A673 (cell line): ENCODE measurements at regions of chr15 and their contacts with region 1.

Region 1: DNA sequence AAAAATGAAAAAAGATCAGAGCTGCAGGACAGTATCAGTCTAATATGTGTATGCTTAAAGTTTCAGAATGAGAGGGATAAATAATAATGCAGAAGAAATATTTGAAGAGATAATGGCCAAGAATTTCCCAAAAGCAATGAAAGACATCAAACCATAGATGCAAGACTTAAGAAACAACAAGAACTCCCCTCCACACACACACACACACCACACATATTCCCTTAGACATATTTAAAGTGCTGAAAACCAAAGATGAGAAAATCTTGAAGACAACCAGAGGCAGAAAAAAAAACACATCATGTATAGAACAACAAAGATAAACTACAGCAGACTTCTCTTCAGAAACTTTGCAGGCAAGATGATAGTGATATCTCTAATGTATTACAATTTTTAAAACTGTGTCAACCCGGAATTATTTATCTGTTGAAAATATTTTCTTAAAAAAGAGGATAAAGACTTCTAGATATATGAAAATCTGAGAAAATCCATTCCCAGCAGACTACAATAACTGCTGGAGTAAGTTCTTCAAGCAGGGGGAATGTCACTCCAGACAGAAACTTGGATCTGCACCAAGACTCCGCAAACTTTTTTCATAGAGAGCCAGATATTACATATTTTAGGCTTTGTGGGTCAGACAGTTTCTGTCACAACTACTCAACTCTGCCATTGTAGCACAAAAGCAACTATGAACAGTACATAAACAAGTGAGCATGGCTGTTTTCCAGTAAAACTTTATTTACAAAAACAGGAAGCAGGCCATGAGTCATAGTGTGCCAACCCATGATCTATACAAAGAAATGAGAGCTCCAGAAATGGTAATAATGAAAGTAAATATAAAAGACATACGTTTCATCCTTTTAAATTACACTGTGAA is 223.4 kb upstream of the CGNL1 start:
- DNase-seq: peak; percentile 77
- H3K4me3 ChIP-seq: no peak overlapping the region
- H3K27ac ChIP-seq: peak overlapping the region; percentile 93
- H3K4me1 ChIP-seq: peaks cover 69% of the 10 kb centered on the region
- H3K27me3 ChIP-seq: no peaks in the 10 kb centered on the region
- CTCF ChIP-seq: no peak

Region 2: DNA sequence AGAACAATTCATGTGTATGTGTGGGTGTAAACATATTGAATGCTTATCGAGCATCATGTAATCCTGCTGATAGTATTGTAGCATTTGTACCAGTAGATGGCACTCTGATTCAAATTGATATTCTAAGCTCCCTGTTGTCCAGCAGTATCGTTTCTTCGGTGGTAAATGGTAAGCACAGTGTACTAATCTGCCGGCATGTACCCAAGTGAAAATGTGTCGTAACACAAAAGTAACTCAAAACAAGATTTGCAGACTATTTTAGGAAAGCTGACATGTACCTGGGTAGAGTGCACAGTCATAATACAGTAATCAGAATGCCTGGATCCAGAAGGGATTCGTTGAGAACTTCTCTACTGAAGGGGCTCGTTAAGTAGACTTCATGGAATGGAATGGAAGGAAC is 656.3 kb before region 1 on chr15:
- CTCF ChIA-PET with region 1: no interaction called
- POLR2A ChIA-PET with region 1: no interaction called
- intact Hi-C with region 1: loop called (anchors 5 kb)
- DNase-seq: peak; percentile 89
- H3K4me3 ChIP-seq: no peak overlapping the region
- H3K27ac ChIP-seq: no peak overlapping the region
- H3K4me1 ChIP-seq: peaks cover 14% of the 10 kb centered on the region
- H3K27me3 ChIP-seq: no peaks in the 10 kb centered on the region
- CTCF ChIP-seq: peak; percentile 83

Region 3: GRCh38 chr15:56963126-56963525 is 189.8 kb before region 1 on chr15:
- CTCF ChIA-PET with region 1: no interaction called
- POLR2A ChIA-PET with region 1: interaction called, 11 read pairs
- intact Hi-C with region 1: no loop called
- DNase-seq: no peak
- H3K4me3 ChIP-seq: no peak overlapping the region
- H3K27ac ChIP-seq: peak overlapping the region; percentile 49
- H3K4me1 ChIP-seq: peaks cover 48% of the 10 kb centered on the region
- H3K27me3 ChIP-seq: no peaks in the 10 kb centered on the region
- CTCF ChIP-seq: no peak

Region 4: GRCh38 chr15:57213862-57214261 is 61.0 kb after region 1 on chr15:
- CTCF ChIA-PET with region 1: interaction called, 13 read pairs
- POLR2A ChIA-PET with region 1: no interaction called
- intact Hi-C with region 1: no loop called
- DNase-seq: peak; percentile 85
- H3K4me3 ChIP-seq: peak overlapping the region; percentile 18
- H3K27ac ChIP-seq: peak overlapping the region; percentile 54
- H3K4me1 ChIP-seq: peaks cover 74% of the 10 kb centered on the region
- H3K27me3 ChIP-seq: no peaks in the 10 kb centered on the region
- CTCF ChIP-seq: peak; percentile 67

Region 5: GRCh38 chr15:57527382-57528091 is 374.6 kb after region 1 on chr15:
- CTCF ChIA-PET with region 1: interaction called, 3 read pairs
- POLR2A ChIA-PET with region 1: interaction called, 23 read pairs
- intact Hi-C with region 1: no loop called
- DNase-seq: peak; percentile 98
- H3K4me3 ChIP-seq: no peak overlapping the region
- H3K27ac ChIP-seq: no peak overlapping the region
- H3K4me1 ChIP-seq: peaks cover 19% of the 10 kb centered on the region
- H3K27me3 ChIP-seq: no peaks in the 10 kb centered on the region
- CTCF ChIP-seq: peak; percentile 75